ENCODE measurements at regions of chr6 and their contacts with region 1.

Region 1: DNA sequence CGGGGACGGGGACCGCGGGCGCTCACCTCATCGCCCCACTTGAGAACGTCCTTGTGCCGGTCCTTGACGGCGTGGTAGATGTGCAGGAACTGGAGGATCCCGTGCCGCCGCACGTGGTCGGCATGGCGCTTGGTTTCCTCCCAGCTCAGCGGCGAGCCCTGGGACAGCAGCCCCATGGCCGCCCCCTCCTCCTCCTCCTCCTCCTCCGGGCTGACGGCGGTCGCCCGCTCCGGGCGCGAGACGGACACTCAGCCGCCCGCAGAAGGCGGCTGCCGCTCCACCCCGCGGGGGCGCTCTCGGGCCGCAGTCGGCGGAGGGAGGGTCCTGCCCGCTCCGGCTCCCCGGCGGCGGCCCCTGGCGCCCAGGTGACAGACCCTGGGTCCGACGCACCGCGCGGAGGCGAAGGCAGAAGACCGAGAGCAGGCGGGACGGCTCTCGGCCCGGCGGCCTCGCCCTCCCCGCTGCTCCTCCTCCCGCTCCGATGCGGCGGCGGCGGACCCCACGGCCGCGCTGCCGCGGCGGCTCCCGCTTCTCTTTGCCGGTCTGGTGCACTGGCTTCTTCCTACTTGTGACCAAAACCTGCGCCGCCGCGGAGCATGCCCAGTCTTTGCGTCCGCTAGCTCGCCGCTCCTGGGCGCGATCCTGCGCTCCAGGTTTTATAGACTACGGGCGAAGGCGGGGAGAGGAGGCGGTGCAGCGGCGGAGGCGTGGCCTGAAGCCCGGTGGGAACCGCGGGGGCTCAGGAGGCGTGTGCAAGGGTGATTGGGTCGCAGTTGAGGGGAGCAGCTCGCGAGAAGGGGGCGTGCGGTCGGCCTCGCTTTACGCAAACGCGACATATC is at the start of gene GCLC:
- DNase-seq: peak; percentile 85 to 95
- H3K4me3 ChIP-seq: peak within 1 kb of the TSS; percentile 79
- H3K27ac ChIP-seq: peak within 1 kb of the TSS; percentile 96
- H3K4me1 ChIP-seq: peaks cover 52% of the 10 kb centered on the region
- H3K27me3 ChIP-seq: no peaks in the 10 kb centered on the region
- CTCF ChIP-seq: peak; percentile 61; the same call in 1 of the 2 replicates
- total RNA-seq, gene GCLC: 213 and 254 TPM in 2 replicates

Region 2: GRCh38 chr6:53492860-53493634 is 51.6 kb before region 1 on chr6:
- CTCF ChIA-PET with region 1: interaction called, 3 read pairs
- POLR2A ChIA-PET with region 1: interaction called, 5 read pairs
- intact Hi-C with region 1: loop called (anchors 1 kb)
- DNase-seq: no peak
- H3K4me3 ChIP-seq: no peak overlapping the region
- H3K27ac ChIP-seq: no peak overlapping the region
- H3K4me1 ChIP-seq: peaks cover 17% of the 10 kb centered on the region
- H3K27me3 ChIP-seq: no peaks in the 10 kb centered on the region
- CTCF ChIP-seq: peak; percentile 80

Region 3: GRCh38 chr6:53615633-53616449 is 71.2 kb after region 1 on chr6:
- CTCF ChIA-PET with region 1: no interaction called
- POLR2A ChIA-PET with region 1: interaction called, 6 read pairs
- intact Hi-C with region 1: loop called (anchors 1 kb)
- DNase-seq: peak; percentile 73 to 100
- H3K4me3 ChIP-seq: peak overlapping the region; percentile 49
- H3K27ac ChIP-seq: peak overlapping the region; percentile 100
- H3K4me1 ChIP-seq: peaks cover 82% of the 10 kb centered on the region
- H3K27me3 ChIP-seq: no peaks in the 10 kb centered on the region
- CTCF ChIP-seq: 0 out of 2 replicates have a peak, but pooled peaks have one; percentile 28

Region 4: GRCh38 chr6:53718597-53719460 is 174.1 kb after region 1 on chr6:
- CTCF ChIA-PET with region 1: no interaction called
- POLR2A ChIA-PET with region 1: no interaction called
- intact Hi-C with region 1: loop called (anchors 2 kb)
- DNase-seq: peak; percentile 33 to 70
- H3K4me3 ChIP-seq: no peak overlapping the region
- H3K27ac ChIP-seq: no peak overlapping the region
- H3K4me1 ChIP-seq: peaks cover 17% of the 10 kb centered on the region
- H3K27me3 ChIP-seq: no peaks in the 10 kb centered on the region
- CTCF ChIP-seq: peak; percentile 84

Measured in PC-9 (cell line).